ENCODE measurements at regions of chr5 and their contacts with region 1.

Region 1: DNA sequence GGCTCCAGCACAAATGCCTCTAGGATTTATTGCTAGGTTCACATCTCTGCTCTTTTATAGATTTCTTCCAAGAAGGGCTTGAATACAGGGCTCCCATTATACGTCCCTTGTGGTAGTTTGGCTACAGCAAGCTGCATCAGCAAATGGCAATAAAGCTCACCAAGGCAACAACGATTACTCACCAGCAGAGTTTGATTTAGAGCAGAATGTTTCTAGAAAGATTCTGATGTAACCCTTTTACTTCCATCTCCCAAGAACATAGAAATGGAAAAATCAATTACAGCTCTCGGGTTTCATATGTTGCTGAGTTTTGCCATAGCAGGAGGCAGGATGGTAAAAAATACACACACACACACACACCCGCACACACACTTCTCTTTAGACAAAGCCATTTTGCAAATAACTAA is 124.2 kb upstream of the TNPO1 start:
- DNase-seq: no peak
- H3K4me3 ChIP-seq: no peak overlapping the region
- H3K27ac ChIP-seq: peak overlapping the region in 2 of 4 donors; percentile 36 to 44
- H3K4me1 ChIP-seq: peaks cover 0 to 24% (median 23%) of the 10 kb centered on the region in 4 donors
- H3K27me3 ChIP-seq: no peaks in the 10 kb centered on the region
- CTCF ChIP-seq: no peak
- EP300 ChIP-seq: no peak
- POLR2A ChIP-seq: no peak

Region 2: DNA sequence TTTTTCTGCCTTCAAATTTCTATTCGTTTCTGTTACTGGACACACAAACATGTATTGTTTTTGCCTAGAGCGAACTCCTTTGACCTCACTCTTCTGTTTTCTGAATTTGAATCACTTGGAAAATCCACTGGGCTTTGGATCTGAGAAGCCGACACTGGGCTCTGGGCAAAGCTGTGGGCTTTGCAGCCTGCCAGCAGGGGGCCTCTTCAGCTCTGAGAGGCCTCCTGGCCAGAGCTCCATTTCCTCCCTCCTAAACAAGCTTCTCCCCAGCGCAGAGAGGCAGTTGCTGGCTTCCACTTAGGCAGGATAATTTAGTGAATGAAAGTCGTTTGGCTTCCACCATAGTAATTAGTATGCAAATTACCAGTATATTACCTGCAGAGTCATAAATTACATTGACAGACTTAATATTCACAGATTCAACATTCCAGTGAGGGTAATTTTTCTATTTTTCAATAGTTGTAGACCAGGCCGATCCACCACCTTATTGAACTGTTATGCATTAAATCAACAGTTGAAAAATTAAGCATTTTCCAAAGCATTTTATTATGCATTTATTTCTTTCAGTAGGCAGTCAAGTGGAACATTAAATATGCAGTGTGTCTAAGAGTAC is 81.0 kb before region 1 on chr5:
- intact Hi-C with region 1: loop called (anchors 5 kb)
- DNase-seq: peak; percentile 88
- H3K4me3 ChIP-seq: no peak overlapping the region
- H3K27ac ChIP-seq: no peak overlapping the region
- H3K4me1 ChIP-seq: peaks cover 2 to 19% (median 10%) of the 10 kb centered on the region in 4 donors
- H3K27me3 ChIP-seq: no peaks in the 10 kb centered on the region
- CTCF ChIP-seq: peak; percentile 75 to 95 (median 86)
- EP300 ChIP-seq: no peak
- POLR2A ChIP-seq: no peak

Region 3: DNA sequence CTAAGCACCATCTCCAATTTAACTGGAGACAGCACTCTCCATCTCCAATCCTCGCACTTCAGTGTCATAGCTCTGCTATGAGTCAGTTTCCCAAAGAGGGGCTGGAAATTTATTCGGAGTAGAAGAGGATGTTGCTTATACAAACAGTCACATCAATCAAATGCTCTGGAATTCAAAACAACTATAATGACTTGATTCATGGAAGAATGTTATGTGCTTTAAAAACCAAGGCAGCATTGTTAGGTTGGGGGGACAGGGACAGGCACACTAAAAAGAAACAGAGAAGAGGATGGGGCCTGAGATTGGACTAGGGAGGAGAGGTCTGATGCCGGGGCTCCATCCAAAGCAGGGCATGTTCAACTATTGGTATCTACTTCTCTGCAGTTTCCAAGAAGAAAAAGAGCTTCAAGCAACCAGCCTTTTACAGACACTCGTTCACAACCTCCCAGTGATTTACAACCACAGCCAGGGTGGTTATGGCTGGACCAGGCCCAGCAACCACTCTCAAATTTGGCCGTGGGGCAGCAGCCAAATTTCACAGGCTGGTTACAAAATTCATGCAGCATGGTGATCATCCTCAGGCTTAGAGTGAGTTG is 67.5 kb before region 1 on chr5:
- intact Hi-C with region 1: loop called (anchors 5 kb)
- DNase-seq: peak; percentile 79
- H3K4me3 ChIP-seq: no peak overlapping the region
- H3K27ac ChIP-seq: peak overlapping the region in 3 of 4 donors; percentile 29 to 73 (median 46)
- H3K4me1 ChIP-seq: peaks cover 0 to 38% (median 26%) of the 10 kb centered on the region in 4 donors
- H3K27me3 ChIP-seq: no peaks in the 10 kb centered on the region
- CTCF ChIP-seq: no peak
- EP300 ChIP-seq: no peak
- POLR2A ChIP-seq: no peak

Region 4: DNA sequence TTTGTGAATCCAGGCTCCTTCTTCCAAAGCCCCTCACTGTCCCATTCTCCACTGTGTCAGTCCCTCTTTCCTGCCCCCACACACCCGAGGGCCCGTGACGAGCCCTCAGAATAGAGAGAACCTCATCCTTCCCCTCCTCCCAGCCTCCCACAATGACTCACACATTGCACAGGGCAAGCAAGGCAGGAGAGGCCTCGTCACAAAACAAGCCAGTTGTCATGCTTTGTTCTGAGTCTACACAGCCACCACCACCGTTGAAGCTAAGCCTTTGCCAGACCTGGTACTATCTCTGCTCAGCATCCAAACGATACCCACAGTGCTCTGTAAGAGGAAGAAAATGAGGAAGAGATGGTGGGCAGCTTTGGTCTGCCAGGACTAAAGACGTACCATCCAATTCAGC is 42.8 kb before region 1 on chr5:
- intact Hi-C with region 1: loop called (anchors 1 kb)
- DNase-seq: peak; percentile 73
- H3K4me3 ChIP-seq: no peak overlapping the region
- H3K27ac ChIP-seq: peak overlapping the region in 3 of 4 donors; percentile 48 to 74 (median 69)
- H3K4me1 ChIP-seq: peaks cover 0 to 48% (median 42%) of the 10 kb centered on the region in 4 donors
- H3K27me3 ChIP-seq: no peaks in the 10 kb centered on the region
- CTCF ChIP-seq: no peak
- EP300 ChIP-seq: no peak
- POLR2A ChIP-seq: no peak